ENCODE measurements at regions of chr6 and their contacts with region 1.

Region 1: GRCh38 chr6:28895134-28895812 is 28.5 kb downstream of the TRIM27 start:
- DNase-seq: peak; percentile 95
- ATAC-seq: peak; percentile 75
- H3K4me3 ChIP-seq: peak overlapping the region; percentile 61 to 66
- H3K27ac ChIP-seq: peak overlapping the region; percentile 85
- H3K4me1 ChIP-seq: peaks cover 11 to 37% of the 10 kb centered on the region in 2 experiments; a peak in 3 of 4 replicates
- H3K27me3 ChIP-seq: no peaks in the 10 kb centered on the region
- CTCF ChIP-seq: no peak
- POLR2A ChIP-seq: peak; percentile 69
- RAD21 ChIP-seq: no peak

Region 2: DNA sequence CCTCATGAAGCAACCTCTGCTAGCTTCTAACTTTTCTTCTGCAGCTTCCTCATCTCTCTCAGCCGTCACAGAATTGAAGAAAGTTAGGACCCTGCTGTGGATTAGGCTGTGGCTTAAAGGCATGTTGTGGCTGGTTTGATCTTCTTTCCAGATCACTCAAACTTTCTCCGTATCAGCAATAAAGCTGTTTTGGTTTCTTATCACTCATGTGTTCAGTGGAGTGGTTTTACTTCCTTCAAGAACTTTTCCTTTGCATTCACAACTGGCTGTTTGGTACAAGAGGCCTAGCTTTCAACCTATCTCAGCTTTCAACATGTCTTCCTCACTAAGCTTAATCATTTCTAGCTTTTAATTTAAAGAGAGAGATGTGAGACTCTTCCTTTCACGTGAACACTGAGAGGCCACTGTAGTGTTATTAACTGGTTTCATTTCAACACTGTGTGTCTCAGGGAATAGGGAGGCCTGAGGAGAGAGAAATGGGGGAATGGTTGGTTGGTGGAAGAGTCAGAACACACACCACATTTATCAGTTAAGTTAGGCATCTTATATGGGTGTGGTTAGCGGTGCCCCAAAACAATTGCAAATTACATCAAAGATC is 469.2 kb before region 1 on chr6:
- CTCF ChIA-PET with region 1: no interaction called
- POLR2A ChIA-PET with region 1: no interaction called
- RAD21 ChIA-PET with region 1: no interaction called
- intact Hi-C with region 1: no loop called
- DNase-seq: no peak
- ATAC-seq: no peak
- H3K4me3 ChIP-seq: no peak overlapping the region
- H3K27ac ChIP-seq: no peak overlapping the region
- H3K4me1 ChIP-seq: peaks cover 0 to 7% of the 10 kb centered on the region in 2 experiments; a peak in 2 of 4 replicates
- H3K27me3 ChIP-seq: no peaks in the 10 kb centered on the region
- CTCF ChIP-seq: no peak
- POLR2A ChIP-seq: no peak
- RAD21 ChIP-seq: no peak

Region 3: GRCh38 chr6:28742668-28743270 is 152.5 kb before region 1 on chr6:
- CTCF ChIA-PET with region 1: no interaction called
- POLR2A ChIA-PET with region 1: no interaction called
- RAD21 ChIA-PET with region 1: no interaction called
- intact Hi-C with region 1: loop called (anchors 5 kb)
- DNase-seq: peak; percentile 86
- ATAC-seq: peak; percentile 65
- H3K4me3 ChIP-seq: peak overlapping the region; percentile 34 to 59
- H3K27ac ChIP-seq: peak overlapping the region; percentile 46
- H3K4me1 ChIP-seq: peaks cover 3 to 20% of the 10 kb centered on the region in 2 experiments; a peak in 3 of 4 replicates
- H3K27me3 ChIP-seq: no peaks in the 10 kb centered on the region
- CTCF ChIP-seq: no peak
- POLR2A ChIP-seq: no peak
- RAD21 ChIP-seq: no peak

Region 4: GRCh38 chr6:28758046-28758817 is 137.0 kb before region 1 on chr6:
- CTCF ChIA-PET with region 1: no interaction called
- POLR2A ChIA-PET with region 1: no interaction called
- RAD21 ChIA-PET with region 1: no interaction called
- intact Hi-C with region 1: loop called (anchors 5 kb)
- DNase-seq: peak; percentile 86
- ATAC-seq: peak; percentile 76
- H3K4me3 ChIP-seq: peak overlapping the region; percentile 34 to 58
- H3K27ac ChIP-seq: peak overlapping the region; percentile 79
- H3K4me1 ChIP-seq: peaks cover 14 to 37% of the 10 kb centered on the region in 2 experiments
- H3K27me3 ChIP-seq: no peaks in the 10 kb centered on the region
- CTCF ChIP-seq: no peak
- POLR2A ChIP-seq: peak; percentile 15
- RAD21 ChIP-seq: no peak

Region 5: GRCh38 chr6:28863604-28864320 is 31.5 kb before region 1 on chr6:
- CTCF ChIA-PET with region 1: no interaction called
- POLR2A ChIA-PET with region 1: interaction called, 4 read pairs
- RAD21 ChIA-PET with region 1: no interaction called
- intact Hi-C with region 1: loop called (anchors 2 kb)
- DNase-seq: peak; percentile 81
- ATAC-seq: peak; percentile 82
- H3K4me3 ChIP-seq: peak overlapping the region; percentile 51 to 59
- H3K27ac ChIP-seq: peak overlapping the region; percentile 61
- H3K4me1 ChIP-seq: peaks cover 11 to 27% of the 10 kb centered on the region in 2 experiments; a peak in 3 of 4 replicates
- H3K27me3 ChIP-seq: no peaks in the 10 kb centered on the region
- CTCF ChIP-seq: no peak; a peak in 1 of 6 replicates
- POLR2A ChIP-seq: no peak
- RAD21 ChIP-seq: no peak

Region 6: DNA sequence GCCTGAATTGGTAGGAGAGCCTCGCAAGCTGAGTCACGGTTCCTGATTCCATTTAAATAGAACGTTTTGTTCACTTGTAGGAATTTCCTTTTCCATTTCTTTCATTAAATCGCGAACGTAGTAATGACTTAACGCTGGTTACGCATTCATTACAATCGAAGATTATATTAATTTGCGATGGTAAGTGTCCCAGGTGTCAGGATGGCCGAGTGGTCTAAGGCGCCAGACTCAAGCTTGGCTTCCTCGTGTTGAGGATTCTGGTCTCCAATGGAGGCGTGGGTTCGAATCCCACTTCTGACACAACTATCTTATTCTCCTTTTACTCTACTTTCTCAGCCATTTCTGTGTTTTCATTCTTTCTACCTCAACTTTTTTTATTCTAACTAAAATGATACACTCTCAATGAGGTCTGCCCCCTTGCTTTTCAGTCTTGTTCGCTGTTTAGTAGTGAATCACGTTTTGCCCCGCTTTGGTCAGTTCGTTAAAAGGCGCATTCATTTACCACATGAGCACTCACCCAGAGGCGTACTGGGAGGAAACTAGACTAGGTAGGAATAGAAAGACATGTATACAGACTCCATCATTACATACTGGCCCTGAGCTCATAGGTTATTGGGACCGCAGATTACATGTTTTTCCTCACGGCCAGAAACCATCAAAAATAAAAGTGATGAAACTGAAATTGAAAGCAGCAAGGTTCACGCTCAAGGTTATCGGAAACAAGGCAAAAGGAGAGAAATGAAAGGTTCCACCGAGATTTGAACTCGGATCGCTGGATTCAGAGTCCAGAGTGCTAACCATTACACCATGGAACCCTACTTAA is 45.8 kb after region 1 on chr6:
- CTCF ChIA-PET with region 1: no interaction called
- POLR2A ChIA-PET with region 1: interaction called, 3 read pairs
- RAD21 ChIA-PET with region 1: no interaction called
- intact Hi-C with region 1: loop called (anchors 2 kb)
- DNase-seq: peak; percentile 79
- ATAC-seq: peak; percentile 74
- H3K4me3 ChIP-seq: peak overlapping the region; percentile 42 to 65
- H3K27ac ChIP-seq: peak overlapping the region; percentile 51
- H3K4me1 ChIP-seq: peaks cover 11 to 43% of the 10 kb centered on the region in 2 experiments; a peak in 3 of 4 replicates
- H3K27me3 ChIP-seq: no peaks in the 10 kb centered on the region
- CTCF ChIP-seq: 0 out of 6 replicates have a peak, but pooled peaks of 1 of the 3 experiments have one; percentile 15
- POLR2A ChIP-seq: peak; percentile 25
- RAD21 ChIP-seq: no peak

Region 7: GRCh38 chr6:28988536-28989311 is 93.5 kb after region 1 on chr6:
- CTCF ChIA-PET with region 1: no interaction called
- POLR2A ChIA-PET with region 1: no interaction called
- RAD21 ChIA-PET with region 1: no interaction called
- intact Hi-C with region 1: loop called (anchors 2 kb)
- DNase-seq: peak; percentile 73
- ATAC-seq: peak; percentile 68
- H3K4me3 ChIP-seq: peak overlapping the region; percentile 35 to 43
- H3K27ac ChIP-seq: peak overlapping the region; percentile 25
- H3K4me1 ChIP-seq: peaks cover 10 to 35% of the 10 kb centered on the region in 2 experiments; a peak in 3 of 4 replicates
- H3K27me3 ChIP-seq: no peaks in the 10 kb centered on the region
- CTCF ChIP-seq: peak; percentile 60 to 69 (median 67); a peak in 5 of 6 replicates
- POLR2A ChIP-seq: no peak
- RAD21 ChIP-seq: peak; percentile 71

Region 8: DNA sequence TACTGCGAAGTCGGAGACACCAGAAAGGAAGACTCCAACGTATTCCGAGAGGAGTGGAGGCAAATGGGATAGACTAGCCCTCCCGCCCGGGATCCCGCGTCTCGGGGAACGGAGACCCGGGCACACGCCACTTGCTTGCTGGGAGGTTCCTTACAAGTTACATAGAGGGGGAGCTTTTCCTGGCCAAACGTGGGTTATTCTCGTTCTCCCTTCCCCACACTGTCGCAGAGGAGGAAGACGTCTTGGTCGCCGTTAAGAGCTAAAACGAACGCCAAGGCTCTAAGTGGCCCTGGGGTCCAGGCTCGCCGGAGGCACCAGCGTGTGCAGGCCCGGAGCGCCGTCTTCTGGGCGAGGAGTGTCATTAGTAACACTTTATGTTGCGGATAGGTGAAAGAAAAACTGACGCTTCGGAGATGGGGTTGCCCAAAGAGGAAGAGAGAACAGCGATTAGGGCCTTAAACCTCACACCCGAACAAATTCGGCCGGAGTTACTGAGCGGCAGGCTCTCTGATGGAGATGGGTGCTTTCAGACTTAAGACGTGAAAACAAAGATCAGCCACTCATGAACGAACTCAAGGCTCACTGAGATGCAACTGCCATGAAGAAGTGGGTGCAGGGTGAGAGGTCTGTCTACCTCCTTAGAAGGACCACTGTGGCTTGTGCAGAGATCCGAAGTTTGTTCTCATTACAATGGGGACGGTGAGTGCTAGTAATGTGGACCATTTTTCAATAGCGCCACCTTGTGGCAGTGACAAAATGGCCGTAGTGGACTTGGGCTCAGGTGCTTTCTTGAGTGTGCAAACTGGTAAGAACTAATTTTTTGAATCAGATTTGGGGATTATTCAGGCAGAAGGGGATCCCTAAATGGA is 121.5 kb after region 1 on chr6:
- CTCF ChIA-PET with region 1: no interaction called
- POLR2A ChIA-PET with region 1: no interaction called
- RAD21 ChIA-PET with region 1: no interaction called
- intact Hi-C with region 1: loop called (anchors 1 kb)
- DNase-seq: peak; percentile 72
- ATAC-seq: peak; percentile 95
- H3K4me3 ChIP-seq: no peak overlapping the region
- H3K27ac ChIP-seq: no peak overlapping the region
- H3K4me1 ChIP-seq: no peaks in the 10 kb centered on the region
- H3K27me3 ChIP-seq: no peaks in the 10 kb centered on the region
- CTCF ChIP-seq: peak; percentile 66 to 86 (median 84)
- POLR2A ChIP-seq: no peak
- RAD21 ChIP-seq: peak; percentile 80

Region 9: DNA sequence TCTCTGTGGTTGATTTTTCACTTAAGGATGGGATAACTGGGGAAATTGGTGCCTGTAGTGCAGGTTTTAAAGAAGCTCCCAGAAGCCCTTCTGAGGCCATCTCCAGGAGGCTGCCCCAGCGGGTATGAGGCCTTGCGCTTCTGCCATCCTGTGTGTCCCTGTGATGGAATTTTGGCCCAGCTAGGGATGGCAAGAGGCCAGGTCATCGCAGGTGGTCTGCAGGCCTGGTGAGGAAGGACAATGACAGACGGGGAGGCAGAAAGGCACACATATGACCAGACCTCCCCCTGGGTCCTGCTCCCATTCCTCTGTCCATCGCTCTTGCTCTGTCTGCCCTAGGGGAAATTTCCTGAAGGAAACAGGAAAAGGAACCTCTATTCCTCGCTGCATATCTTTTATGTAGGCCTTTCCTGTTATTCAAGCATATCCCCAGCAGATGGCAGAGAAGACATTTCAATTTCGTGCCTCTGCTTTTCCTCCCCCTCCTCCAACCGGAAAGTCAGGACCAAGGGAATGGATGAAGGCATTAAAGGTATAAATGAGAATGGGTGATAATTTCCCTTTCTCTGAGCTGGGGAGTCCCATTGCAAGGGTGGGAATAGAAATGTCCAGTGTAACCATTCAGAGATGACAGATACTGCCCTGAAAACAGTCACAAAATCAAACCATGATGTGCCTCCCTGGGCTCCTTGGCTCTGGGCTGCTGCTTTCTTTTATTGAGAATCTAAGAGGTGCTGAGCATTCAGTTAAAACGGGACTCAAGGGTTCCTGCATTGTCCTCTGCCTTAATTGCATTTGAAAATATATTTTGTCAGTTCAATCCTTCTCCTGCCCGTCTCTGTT is 810.3 kb after region 1 on chr6:
- CTCF ChIA-PET with region 1: no interaction called
- POLR2A ChIA-PET with region 1: no interaction called
- RAD21 ChIA-PET with region 1: no interaction called
- intact Hi-C with region 1: no loop called
- DNase-seq: peak; percentile 48
- ATAC-seq: peak; percentile 71
- H3K4me3 ChIP-seq: no peak overlapping the region
- H3K27ac ChIP-seq: no peak overlapping the region
- H3K4me1 ChIP-seq: peaks cover 0 to 3% of the 10 kb centered on the region in 2 experiments; a peak in 1 of 4 replicates
- H3K27me3 ChIP-seq: peaks cover 5% of the 10 kb centered on the region; the same call in 1 of the 2 replicates
- CTCF ChIP-seq: peak; percentile 64 to 83 (median 71); a peak in 5 of 6 replicates
- POLR2A ChIP-seq: no peak
- RAD21 ChIP-seq: peak; percentile 93